Activated CD4-positive, alpha-beta memory T cell treated with anti-CD3 and anti-CD28 coated beads for 36 hours (primary cell): ENCODE measurements at regions of chr2 and their contacts with region 1.

Region 1: GRCh38 chr2:195486987-195487644 is 169.9 kb upstream of the SLC39A10 start:
- DNase-seq: no peak
- H3K4me3 Mint-ChIP-seq: no peak overlapping the region
- H3K27ac Mint-ChIP-seq: peak overlapping the region; percentile 57
- H3K4me1 Mint-ChIP-seq: peaks cover 22% of the 10 kb centered on the region
- H3K27me3 Mint-ChIP-seq: no peaks in the 10 kb centered on the region

Region 2: DNA sequence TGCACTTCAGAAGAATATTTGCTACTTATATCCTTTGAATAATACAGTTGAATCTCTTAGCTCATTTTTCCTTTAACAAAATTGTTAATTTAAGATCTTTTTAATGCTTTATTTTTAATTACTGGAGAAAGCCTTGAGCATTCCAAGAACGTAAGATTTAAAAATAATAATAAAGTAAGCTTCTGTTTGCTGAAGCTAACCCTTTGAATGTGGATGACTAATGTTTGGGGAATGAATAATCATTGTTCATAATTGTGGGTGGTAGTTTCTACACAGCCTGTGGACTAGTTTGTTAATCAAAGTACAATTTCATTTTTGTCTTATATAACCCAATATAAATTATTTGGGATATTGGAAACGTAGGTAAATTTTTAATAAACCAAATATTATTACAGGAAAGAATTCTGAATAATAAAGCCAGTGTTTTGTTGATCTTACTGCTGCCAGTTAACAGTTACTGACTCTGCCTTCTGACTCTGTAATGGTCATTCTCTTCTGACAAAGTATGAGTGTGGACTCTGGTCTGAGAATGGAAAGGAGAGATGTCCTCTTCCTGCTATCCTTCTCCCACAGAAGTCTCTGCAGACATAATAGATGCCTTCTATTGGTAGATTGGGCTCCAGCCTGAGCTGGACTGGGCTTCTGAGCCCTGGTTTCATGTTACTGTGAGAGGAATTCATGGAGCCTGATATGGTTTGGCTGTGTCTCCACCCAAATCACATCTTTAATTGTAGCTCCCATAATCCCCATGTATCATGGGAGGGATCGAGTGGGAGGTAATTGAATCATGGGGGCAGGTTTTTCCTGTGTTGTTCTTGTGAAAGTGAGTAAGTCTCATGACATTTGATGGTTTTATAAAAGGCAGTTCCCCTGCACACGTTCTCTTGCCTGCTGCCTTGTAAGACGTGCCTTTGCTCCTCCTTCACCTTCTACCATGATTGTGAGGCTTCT is 122.8 kb before region 1 on chr2:
- CTCF ChIA-PET with region 1: no interaction called
- POLR2A ChIA-PET with region 1: no interaction called
- intact Hi-C with region 1: loop called (anchors 2 kb)
- DNase-seq: no peak
- H3K4me3 Mint-ChIP-seq: no peak overlapping the region
- H3K27ac Mint-ChIP-seq: no peak overlapping the region
- H3K4me1 Mint-ChIP-seq: peaks cover 29% of the 10 kb centered on the region
- H3K27me3 Mint-ChIP-seq: no peaks in the 10 kb centered on the region

Region 3: GRCh38 chr2:195382186-195382585 is 104.9 kb before region 1 on chr2:
- CTCF ChIA-PET with region 1: no interaction called
- POLR2A ChIA-PET with region 1: no interaction called
- intact Hi-C with region 1: no loop called
- DNase-seq: peak; percentile 26
- H3K4me3 Mint-ChIP-seq: no peak overlapping the region
- H3K27ac Mint-ChIP-seq: peak overlapping the region; percentile 14
- H3K4me1 Mint-ChIP-seq: peaks cover 8% of the 10 kb centered on the region
- H3K27me3 Mint-ChIP-seq: no peaks in the 10 kb centered on the region

Region 4: DNA sequence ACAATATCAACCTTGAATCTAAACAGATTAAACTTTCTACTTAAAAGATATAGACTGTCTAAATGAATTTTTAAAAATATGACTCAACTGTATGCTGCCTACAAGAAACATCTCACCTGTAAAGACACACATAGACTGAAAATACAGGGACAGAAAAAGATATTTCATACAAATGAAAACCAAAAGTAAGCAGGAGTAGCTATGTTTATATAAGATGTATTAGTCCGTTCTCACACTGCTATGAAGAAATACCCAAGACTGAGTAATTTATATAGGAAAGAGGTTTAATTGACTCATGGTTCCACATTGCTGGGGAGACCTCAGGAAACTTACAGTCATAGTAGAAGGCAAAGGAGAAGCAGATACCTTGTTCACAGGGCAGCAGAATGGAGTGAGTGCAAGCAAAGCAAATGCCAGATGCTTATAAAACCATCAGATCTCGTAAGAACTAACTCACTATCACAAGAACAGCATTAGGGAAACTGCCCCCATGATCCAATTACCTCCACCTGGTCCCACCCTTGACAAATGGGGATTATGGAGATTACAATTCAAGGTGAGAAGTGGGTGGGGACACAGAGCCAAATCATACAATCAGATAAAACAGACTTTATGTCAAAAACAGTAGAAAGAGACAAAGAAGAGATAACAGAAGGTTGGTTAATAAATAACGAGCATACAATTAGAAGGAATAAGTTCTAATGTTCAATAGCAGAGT is 44.5 kb before region 1 on chr2:
- CTCF ChIA-PET with region 1: no interaction called
- POLR2A ChIA-PET with region 1: no interaction called
- intact Hi-C with region 1: loop called (anchors 2 kb)
- DNase-seq: no peak
- H3K4me3 Mint-ChIP-seq: no peak overlapping the region
- H3K27ac Mint-ChIP-seq: peak overlapping the region; percentile 20
- H3K4me1 Mint-ChIP-seq: peaks cover 9% of the 10 kb centered on the region
- H3K27me3 Mint-ChIP-seq: no peaks in the 10 kb centered on the region

Region 5: DNA sequence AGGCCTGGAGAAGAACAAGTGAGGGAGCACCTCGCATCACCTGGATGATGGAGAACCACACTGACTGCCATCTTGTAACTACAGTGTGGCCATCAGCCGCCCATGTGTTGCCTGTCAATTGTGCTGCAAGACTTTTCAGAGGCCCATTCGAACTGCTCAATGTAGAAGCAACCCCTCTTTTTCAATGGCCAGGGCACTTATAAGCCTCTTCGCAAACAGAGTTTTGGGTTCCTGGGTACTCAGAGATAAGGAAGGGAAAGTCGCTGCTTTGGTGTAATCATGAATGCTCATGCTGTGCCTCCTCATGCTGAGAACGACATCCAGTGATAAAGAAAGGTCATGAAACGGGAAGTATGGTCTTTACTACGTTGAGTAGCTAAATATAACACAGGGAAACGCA is 26.0 kb after region 1 on chr2:
- CTCF ChIA-PET with region 1: no interaction called
- POLR2A ChIA-PET with region 1: no interaction called
- intact Hi-C with region 1: no loop called
- DNase-seq: no peak
- H3K4me3 Mint-ChIP-seq: no peak overlapping the region
- H3K27ac Mint-ChIP-seq: no peak overlapping the region
- H3K4me1 Mint-ChIP-seq: peaks cover 10% of the 10 kb centered on the region
- H3K27me3 Mint-ChIP-seq: no peaks in the 10 kb centered on the region

Region 6: DNA sequence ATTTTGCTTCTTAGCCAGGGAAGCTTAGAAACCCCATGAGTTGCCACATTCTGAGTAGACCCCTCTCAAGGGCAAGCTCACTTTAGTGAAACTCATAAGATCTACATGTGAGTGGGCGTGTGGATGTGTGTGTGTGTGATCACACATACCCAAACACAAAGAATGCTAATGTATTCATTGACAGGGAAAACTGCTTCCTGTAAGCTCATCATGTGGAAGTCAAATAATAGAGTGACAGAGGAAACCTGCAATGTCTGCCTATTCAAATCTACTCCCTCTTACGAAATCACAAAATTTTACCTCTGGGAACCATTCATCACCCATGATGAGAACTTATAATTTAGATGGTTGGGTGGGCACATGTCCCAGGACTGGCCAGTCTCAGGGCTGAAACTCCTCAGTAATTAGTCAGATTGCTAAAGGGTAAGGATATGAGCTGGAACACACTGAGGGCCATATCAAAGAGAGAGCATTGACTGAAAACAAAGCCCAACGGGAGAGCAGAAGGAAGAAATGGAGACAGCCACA is 1057.9 kb after region 1 on chr2:
- CTCF ChIA-PET with region 1: no interaction called
- POLR2A ChIA-PET with region 1: no interaction called
- intact Hi-C with region 1: no loop called
- DNase-seq: no peak
- H3K4me3 Mint-ChIP-seq: no peak overlapping the region
- H3K27ac Mint-ChIP-seq: no peak overlapping the region
- H3K4me1 Mint-ChIP-seq: no peaks in the 10 kb centered on the region
- H3K27me3 Mint-ChIP-seq: peaks cover 5% of the 10 kb centered on the region